ENCODE measurements at regions of chr16 and their contacts with region 1.

Region 1: DNA sequence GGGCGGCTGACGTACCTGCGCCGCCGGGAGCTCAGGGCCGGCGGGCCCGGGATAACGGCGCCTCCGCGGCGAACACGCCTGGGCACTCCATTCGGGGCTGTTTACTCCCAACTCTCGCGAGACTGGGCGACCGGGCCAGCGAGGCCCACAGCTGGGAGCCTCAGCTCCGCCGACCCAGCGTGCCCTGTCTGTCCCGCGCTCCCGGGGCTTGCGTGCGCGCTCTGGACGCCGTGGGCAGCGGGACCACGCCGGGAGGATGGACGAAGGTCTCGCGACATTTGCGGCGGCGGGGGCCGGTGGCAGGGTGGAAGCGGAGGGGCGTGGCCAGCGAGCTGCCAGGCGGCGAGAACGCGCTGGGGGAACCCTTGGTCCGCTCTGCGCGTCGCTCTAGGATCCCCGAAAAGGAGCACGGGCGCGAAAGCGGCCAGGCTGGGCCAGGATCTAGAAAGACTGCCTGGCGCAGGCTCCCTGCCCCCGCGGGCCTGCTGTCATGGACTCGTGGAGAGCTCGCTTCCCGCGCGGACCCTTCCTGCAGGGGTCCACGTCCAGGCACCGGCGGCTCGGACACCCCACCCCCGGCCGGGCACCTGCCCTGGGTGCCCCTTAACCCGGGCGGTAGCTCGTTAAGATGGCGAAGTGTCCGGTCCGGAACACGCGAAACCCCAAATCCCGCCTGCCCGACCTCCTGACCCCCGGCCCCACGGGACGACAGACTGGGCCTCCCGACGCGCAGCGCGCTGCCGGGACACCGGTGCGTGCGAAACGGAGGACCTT is at the start of gene MBTPS1:
- H3K4me3 ChIP-seq: peak within 1 kb of the TSS; percentile 82
- H3K27ac ChIP-seq: peak within 1 kb of the TSS; percentile 79
- H3K4me1 ChIP-seq: no peaks in the 10 kb centered on the region
- CTCF ChIP-seq: peak; percentile 28; the same call in 1 of the 2 replicates

Region 2: DNA sequence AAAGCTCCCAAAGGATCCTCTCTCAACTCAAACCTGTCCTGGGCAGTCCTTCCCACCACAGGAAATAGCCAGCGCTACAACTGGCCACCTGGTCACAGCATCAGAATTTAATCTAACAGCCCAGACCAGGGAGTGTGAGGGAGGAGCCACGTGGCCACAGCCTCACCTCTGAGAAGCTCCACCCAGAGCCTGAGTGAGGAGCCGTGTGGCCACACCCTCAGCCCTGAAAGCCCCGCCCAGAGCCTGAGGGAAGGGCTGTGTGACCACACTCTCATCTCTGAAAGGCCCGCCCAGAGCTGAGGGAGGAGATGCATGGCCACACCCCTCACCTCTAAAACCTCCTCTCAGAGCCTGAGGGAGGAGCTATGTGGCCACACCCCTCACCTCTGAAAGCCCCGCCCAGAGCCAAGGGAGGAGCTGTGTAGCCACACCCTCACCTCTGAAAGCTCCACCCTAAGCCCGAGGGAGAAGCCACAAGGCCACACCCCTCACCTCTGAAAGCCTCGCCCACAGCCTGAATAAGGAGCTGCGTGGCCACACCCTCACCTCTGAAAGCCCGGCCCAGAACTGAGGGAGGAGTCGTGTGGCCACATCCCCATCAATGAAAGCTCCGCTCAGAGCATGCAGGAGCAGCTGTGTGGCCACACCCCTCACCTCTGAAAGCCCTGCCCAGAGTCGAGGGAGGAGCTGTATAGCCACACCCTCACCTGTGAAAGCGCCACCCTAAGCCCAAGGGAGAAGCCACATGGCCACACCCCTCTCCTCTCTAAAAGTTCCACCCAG is 102.9 kb before region 1 on chr16:
- CTCF ChIA-PET with region 1: no interaction called
- POLR2A ChIA-PET with region 1: interaction called, 11 read pairs
- H3K4me3 ChIP-seq: no peak overlapping the region
- H3K27ac ChIP-seq: no peak overlapping the region
- H3K4me1 ChIP-seq: no peaks in the 10 kb centered on the region
- CTCF ChIP-seq: no peak

Region 3: GRCh38 chr16:84075376-84075775 is 41.5 kb before region 1 on chr16:
- CTCF ChIA-PET with region 1: no interaction called
- POLR2A ChIA-PET with region 1: no interaction called
- H3K4me3 ChIP-seq: no peak overlapping the region
- H3K27ac ChIP-seq: no peak overlapping the region
- H3K4me1 ChIP-seq: no peaks in the 10 kb centered on the region
- CTCF ChIP-seq: no peak

Region 4: GRCh38 chr16:84093879-84094270 is 23.0 kb before region 1 on chr16:
- CTCF ChIA-PET with region 1: no interaction called
- POLR2A ChIA-PET with region 1: no interaction called
- H3K4me3 ChIP-seq: no peak overlapping the region
- H3K27ac ChIP-seq: no peak overlapping the region
- H3K4me1 ChIP-seq: peaks cover 3% of the 10 kb centered on the region; the same call in 1 of the 2 replicates
- CTCF ChIP-seq: no peak

Region 5: DNA sequence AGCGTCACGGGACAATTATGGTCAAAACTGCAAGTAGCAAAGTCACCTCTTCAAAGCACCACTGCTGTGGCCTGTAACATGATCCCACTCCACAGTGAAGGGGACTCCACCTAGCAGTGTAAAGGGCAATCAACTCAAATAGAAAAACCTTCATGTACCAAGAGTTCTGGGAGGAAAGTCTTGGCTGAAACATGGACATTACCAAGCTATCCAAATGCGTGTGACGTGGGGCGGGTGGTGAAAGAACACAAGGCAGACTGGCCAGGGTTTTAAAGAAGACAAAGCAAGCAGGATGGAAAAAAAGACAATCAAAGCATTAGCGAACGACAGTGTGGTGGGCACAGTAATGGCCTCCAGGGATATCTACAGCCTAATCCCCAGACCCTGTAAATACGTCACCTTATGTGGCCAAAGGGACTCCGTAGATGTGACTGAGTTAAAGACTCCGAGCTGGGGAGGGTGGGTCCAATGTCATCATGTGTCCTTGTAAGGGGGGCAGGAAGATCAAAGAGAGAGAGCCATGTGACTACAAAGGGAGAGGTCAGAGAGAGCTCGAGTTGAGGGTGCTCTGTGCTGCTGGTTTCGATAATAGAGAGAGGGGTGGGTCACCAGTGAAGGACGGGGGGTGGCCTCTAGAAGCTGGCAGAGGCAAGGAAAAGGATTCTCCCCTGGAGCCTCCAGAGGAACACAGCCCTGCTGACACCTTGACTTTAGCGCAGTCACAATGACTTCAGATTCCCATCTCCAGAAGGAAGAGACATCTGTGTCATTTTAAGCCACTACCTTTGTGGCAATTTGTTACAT is 22.1 kb after region 1 on chr16:
- CTCF ChIA-PET with region 1: interaction called, 4 read pairs
- POLR2A ChIA-PET with region 1: interaction called, 23 read pairs
- H3K4me3 ChIP-seq: no peak overlapping the region
- H3K27ac ChIP-seq: peak overlapping the region; percentile 10; the same call in 1 of the 2 replicates
- H3K4me1 ChIP-seq: peaks cover 7% of the 10 kb centered on the region; the same call in 1 of the 2 replicates
- CTCF ChIP-seq: no peak

Region 6: DNA sequence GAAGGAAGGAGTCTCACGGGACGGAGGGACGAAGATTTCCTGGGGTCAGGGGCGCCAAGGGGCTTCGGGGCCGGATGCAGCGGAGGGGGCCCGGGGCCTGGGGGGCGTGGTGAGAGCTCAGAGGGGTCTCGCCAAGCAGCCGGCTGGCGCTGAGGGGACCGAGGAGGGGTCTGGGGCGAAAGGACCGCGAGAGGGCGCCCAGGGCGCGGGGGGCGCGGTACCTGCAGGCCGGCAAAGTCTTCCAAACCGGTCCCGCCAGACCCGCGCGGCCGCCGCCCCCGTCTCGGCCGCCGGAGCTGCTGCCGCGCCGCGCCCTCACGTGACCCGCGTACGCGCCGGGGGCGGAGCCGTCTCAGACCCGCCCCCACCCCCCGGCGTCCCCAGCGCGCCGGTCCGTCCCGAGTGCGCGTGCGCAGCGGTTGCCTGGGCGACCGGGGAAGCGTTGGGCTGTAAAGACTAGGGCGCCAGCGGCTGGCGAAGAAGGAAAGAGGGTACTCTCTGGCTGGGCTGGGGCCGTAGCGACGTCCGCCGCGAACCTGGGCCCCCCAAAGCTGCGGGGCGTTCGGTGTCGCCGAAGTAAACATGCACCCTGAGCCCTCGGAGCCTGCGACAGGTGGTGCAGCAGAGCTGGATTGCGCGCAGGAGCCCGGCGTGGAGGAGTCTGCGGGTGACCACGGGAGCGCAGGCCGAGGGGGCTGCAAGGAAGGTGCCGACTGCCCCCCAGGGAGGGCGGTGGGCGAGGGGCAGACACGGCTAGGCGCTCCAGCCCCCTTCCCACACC is 28.1 kb after region 1 on chr16 and contains the starts of genes DNAAF1 and HSDL1:
- CTCF ChIA-PET with region 1: interaction called, 4 read pairs
- POLR2A ChIA-PET with region 1: interaction called, 23 read pairs
- H3K4me3 ChIP-seq: peak within 1 kb of the TSS; percentile 77
- H3K27ac ChIP-seq: peak within 1 kb of the TSS; percentile 34; the same call in 1 of the 2 replicates
- H3K4me1 ChIP-seq: no peaks in the 10 kb centered on the region
- CTCF ChIP-seq: no peak